Dorsolateral prefrontal cortex (tissue), 120 donors: ENCODE measurements at regions of chr16 and their contacts with region 1.

Region 1: GRCh38 chr16:59733321-59733720 is 999.2 kb upstream of the GOT2 start:
- DNase-seq: no peak
- H3K4me3 ChIP-seq: no peak overlapping the region
- H3K27ac ChIP-seq: peak overlapping the region in 4 of 59 donors; percentile 31 to 64 (median 38)
- H3K27me3 ChIP-seq: peaks cover 0 to 7% (median 0%) of the 10 kb centered on the region in 45 donors
- CTCF ChIP-seq: peak in 1 of 56 donors; percentile 18

Region 2: DNA sequence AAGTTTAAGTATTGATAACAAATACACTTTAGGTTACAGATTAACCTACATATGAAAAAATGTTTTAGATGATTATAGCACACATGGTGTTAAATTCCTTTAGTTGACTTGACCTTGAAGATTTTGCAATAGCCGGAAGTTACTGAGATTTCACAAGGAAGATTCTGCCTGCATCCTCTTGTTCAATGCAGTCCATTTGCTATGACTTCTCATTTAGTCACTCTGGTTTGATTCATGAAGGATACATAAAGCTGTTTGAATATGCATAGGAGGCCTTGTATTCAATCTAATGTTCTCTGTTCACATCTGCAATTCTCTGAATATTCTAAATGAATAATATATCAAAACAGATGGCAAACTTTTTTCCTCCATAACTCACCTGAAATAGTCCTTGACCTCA is 129.0 kb before region 1 on chr16:
- intact Hi-C with region 1: loop called in 1 of 2 experiments (anchors 5 kb)
- DNase-seq: no peak
- H3K4me3 ChIP-seq: no peak overlapping the region
- H3K27ac ChIP-seq: no peak overlapping the region
- H3K27me3 ChIP-seq: no peaks in the 10 kb centered on the region
- CTCF ChIP-seq: no peak

Region 3: DNA sequence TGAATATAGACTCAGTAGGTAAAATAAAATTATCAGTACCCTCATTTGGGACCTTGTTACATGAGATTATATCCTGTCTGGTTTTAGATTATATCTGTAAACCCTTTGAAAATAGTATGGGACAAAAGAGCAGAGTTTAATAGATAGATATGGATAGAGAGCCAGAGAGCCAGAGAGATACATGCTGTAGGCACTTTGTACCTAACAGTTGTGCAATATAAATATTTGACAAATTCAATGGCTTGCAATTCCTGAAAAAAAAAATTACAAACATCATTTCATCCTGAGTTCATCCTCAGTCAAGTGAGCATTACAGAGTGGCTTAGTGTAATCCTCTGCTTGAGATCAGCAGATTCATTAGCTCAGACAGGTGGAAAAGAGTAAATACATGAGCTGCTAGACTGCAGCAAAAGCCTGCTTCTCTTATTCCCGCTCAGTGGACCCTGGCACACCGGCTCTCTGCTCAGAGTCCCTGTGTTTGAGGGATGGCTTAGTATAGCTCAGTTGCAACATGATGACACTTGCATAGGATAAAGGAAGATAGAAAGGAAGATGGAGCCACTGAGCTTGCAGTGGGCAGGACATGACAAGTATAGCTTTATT is 67.6 kb before region 1 on chr16:
- intact Hi-C with region 1: no loop called
- DNase-seq: no peak
- H3K4me3 ChIP-seq: no peak overlapping the region
- H3K27ac ChIP-seq: no peak overlapping the region
- H3K27me3 ChIP-seq: no peaks in the 10 kb centered on the region
- CTCF ChIP-seq: no peak

Region 4: DNA sequence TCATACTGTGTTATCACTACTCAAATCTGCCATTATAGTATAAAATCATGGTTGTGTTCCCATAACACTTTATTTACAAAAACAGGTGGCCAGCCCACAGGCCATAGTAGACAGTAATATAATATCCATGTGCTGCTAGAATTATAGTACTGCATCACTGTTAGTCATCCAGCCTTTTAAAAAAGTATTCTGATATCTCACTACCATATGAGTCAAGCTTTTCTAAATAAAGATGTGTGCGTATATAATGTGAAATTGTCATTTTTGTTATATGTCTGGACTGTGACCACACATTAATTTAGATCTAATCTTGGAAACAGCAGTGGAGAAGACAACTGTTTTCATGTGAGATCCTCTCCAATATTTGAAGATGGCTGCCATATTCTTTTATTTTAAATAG is 49.9 kb after region 1 on chr16:
- intact Hi-C with region 1: no loop called
- DNase-seq: no peak
- H3K4me3 ChIP-seq: no peak overlapping the region
- H3K27ac ChIP-seq: no peak overlapping the region
- H3K27me3 ChIP-seq: no peaks in the 10 kb centered on the region
- CTCF ChIP-seq: no peak